Stomach (tissue), 19 donors: ENCODE measurements at regions of chr2 and their contacts with region 1.

Region 1: GRCh38 chr2:73828818-73829570 is at the start of gene STAMBP:
- DNase-seq: peak; percentile 98 to 99
- H3K4me3 ChIP-seq: peak within 1 kb of the TSS; percentile 67 to 81 (median 71)
- H3K27ac ChIP-seq: peak within 1 kb of the TSS; percentile 93 to 96 (median 95)
- H3K4me1 ChIP-seq: peaks cover 6 to 43% (median 29%) of the 10 kb centered on the region in 4 donors
- H3K27me3 ChIP-seq: no peaks in the 10 kb centered on the region
- CTCF ChIP-seq: no peak
- EP300 ChIP-seq: no peak
- POLR2A ChIP-seq: no peak
- total RNA-seq, gene STAMBP: 22.6 to 84.9 (median 50.4) TPM

Region 2: DNA sequence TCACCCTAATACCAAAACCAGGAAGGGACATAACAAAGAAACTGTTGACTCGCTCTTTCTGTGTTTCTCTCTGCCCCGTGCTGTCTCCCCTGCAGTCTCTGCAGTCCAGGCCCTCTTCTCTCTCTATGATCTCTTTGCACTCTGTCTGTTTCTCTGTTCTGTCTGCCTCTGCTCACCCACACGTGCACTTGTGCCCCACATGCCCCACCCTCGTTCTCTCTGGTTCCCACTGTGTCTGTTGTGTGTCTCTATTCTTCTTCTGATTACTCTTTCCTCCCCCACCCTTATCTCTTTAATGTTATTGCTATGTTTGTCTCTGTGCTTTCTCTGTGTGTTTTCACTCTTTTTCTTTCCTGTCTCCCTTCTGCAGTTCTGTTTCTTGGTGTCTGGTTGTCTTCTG is 240.8 kb before region 1 on chr2:
- intact Hi-C with region 1: no loop called
- DNase-seq: peak in 1 of 2 donors; percentile 9
- H3K4me3 ChIP-seq: no peak overlapping the region
- H3K27ac ChIP-seq: no peak overlapping the region
- H3K4me1 ChIP-seq: no peaks in the 10 kb centered on the region
- H3K27me3 ChIP-seq: no peaks in the 10 kb centered on the region
- CTCF ChIP-seq: no peak
- EP300 ChIP-seq: no peak
- POLR2A ChIP-seq: no peak

Region 3: GRCh38 chr2:73926493-73927338 is 97.7 kb after region 1 on chr2 and contains the start of gene DGUOK:
- intact Hi-C with region 1: loop called (anchors 10 kb)
- DNase-seq: peak; percentile 98 to 100
- H3K4me3 ChIP-seq: peak within 1 kb of the TSS; percentile 62 to 70 (median 67)
- H3K27ac ChIP-seq: peak within 1 kb of the TSS; percentile 94 to 98 (median 96)
- H3K4me1 ChIP-seq: peaks cover 24 to 52% (median 37%) of the 10 kb centered on the region in 4 donors
- H3K27me3 ChIP-seq: no peaks in the 10 kb centered on the region
- CTCF ChIP-seq: no peak
- EP300 ChIP-seq: peak; percentile 43
- POLR2A ChIP-seq: peak in 2 of 4 donors; percentile 91 to 95
- total RNA-seq, gene DGUOK: 1.7 to 33.8 (median 14.1) TPM in 4 of 5 donors, not detected in the other

Region 4: DNA sequence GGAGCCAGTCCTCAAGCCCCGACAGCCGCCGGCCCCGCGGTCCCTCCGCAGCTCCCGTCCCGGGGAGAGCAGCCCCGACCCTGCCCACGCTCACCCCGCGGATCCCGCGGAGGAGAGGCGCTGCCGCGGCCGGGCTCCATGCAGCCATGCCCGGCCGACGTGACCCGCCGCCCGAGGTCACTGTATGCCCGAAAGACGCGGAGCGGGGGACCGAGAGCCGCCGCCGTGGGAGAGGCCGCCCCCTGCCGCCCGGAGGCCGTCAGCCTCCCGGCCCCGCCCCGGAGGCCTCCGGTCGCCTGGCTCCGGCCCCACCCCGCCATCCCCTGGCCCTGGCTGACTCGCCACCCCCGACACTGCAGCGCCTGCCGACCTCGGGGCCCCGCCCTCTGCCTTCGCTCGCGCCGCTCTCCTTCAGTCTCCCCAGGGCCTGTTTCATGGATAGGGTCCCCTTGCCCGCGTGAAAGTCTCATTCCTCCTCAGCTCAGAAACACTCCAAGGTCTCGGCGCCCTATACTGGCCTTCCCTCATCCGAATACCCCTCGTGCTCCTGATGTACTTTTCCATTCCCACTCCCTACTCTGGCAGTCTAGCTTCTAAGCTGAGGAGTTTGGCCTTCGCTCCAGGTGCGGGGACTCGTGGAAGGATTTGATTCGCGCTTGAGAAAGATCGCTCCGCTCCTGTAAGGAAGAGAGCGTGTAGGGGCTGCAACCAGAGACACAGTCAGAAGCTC is 318.9 kb after region 1 on chr2 and contains the start of gene BOLA3:
- intact Hi-C with region 1: loop called (anchors 10 kb)
- DNase-seq: peak; percentile 86 to 95
- H3K4me3 ChIP-seq: peak within 1 kb of the TSS; percentile 74 to 88 (median 84)
- H3K27ac ChIP-seq: peak within 1 kb of the TSS; percentile 32 to 86 (median 75)
- H3K4me1 ChIP-seq: peaks cover 11 to 28% (median 18%) of the 10 kb centered on the region in 4 donors
- H3K27me3 ChIP-seq: no peaks in the 10 kb centered on the region
- CTCF ChIP-seq: peak in 4 of 7 experiments; percentile 18 to 82 (median 74)
- EP300 ChIP-seq: no peak
- POLR2A ChIP-seq: no peak
- total RNA-seq, gene BOLA3: 13.3 to 310 (median 65.8) TPM in 4 of 5 donors, not detected in the other

Region 5: GRCh38 chr2:74290466-74291217 is 461.6 kb after region 1 on chr2:
- intact Hi-C with region 1: no loop called
- DNase-seq: peak; percentile 48
- H3K4me3 ChIP-seq: no peak overlapping the region
- H3K27ac ChIP-seq: no peak overlapping the region
- H3K4me1 ChIP-seq: peaks cover 5 to 30% (median 16%) of the 10 kb centered on the region in 4 donors
- H3K27me3 ChIP-seq: no peaks in the 10 kb centered on the region
- CTCF ChIP-seq: no peak
- EP300 ChIP-seq: no peak
- POLR2A ChIP-seq: no peak

Region 6: GRCh38 chr2:74334931-74335333 is 505.9 kb after region 1 on chr2:
- intact Hi-C with region 1: loop called (anchors 10 kb)
- DNase-seq: peak; percentile 82 to 92
- H3K4me3 ChIP-seq: no peak overlapping the region
- H3K27ac ChIP-seq: no peak overlapping the region
- H3K4me1 ChIP-seq: no peaks in the 10 kb centered on the region
- H3K27me3 ChIP-seq: no peaks in the 10 kb centered on the region
- CTCF ChIP-seq: peak in 5 of 7 experiments; percentile 79 to 94 (median 89)
- EP300 ChIP-seq: no peak
- POLR2A ChIP-seq: no peak